MCF 10A (cell line): ENCODE measurements at regions of chr12 and their contacts with region 1.

Region 1: DNA sequence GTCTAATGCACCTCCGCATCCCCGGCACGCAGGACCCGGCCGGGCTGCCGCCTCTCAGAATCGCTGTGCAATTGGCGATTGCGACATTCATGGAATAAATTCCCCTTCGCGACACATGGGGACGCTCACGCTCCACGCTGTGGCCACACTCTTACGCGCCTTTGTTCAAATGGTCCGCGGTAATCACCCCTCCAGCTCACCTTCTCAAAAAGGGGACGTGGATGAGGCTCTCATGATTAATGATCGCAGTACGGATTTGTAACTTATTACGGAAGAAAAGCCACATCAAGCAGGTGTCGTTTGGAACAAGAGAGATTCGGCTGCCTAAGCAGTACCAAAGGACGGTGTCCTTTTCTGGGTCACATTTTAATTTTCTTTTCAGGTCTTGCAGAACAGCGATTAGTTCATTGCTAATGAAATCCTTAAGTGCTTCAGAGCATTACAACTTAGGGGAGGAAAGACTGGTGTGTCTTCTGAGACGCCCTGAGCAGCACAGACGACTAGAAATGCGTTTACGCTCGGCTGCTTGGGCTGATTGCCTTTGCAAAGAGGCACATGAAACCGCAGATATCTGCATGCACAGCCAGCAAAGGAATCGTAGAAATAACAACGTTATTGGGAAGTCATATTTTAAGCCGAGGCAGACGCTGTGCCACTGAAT is 37.3 kb upstream of the ADGRD1 start:
- DNase-seq: peak; percentile 27
- H3K4me3 Mint-ChIP-seq: no peak overlapping the region
- H3K27ac Mint-ChIP-seq: no peak overlapping the region
- H3K4me1 Mint-ChIP-seq: peaks cover 19% of the 10 kb centered on the region
- H3K27me3 Mint-ChIP-seq: peaks cover 38% of the 10 kb centered on the region
- CTCF ChIP-seq: peak; percentile 95

Region 2: GRCh38 chr12:130761537-130762318 is 154.7 kb before region 1 on chr12:
- CTCF ChIA-PET with region 1: no interaction called
- POLR2A ChIA-PET with region 1: no interaction called
- intact Hi-C with region 1: no loop called
- DNase-seq: peak; percentile 45
- H3K4me3 Mint-ChIP-seq: no peak overlapping the region
- H3K27ac Mint-ChIP-seq: no peak overlapping the region
- H3K4me1 Mint-ChIP-seq: no peaks in the 10 kb centered on the region
- H3K27me3 Mint-ChIP-seq: no peaks in the 10 kb centered on the region
- CTCF ChIP-seq: peak; percentile 85

Region 3: GRCh38 chr12:131092901-131093603 is 176.7 kb after region 1 on chr12:
- CTCF ChIA-PET with region 1: interaction called, 4 read pairs
- POLR2A ChIA-PET with region 1: no interaction called
- intact Hi-C with region 1: loop called (anchors 5 kb)
- DNase-seq: peak; percentile 78
- H3K4me3 Mint-ChIP-seq: no peak overlapping the region
- H3K27ac Mint-ChIP-seq: no peak overlapping the region
- H3K4me1 Mint-ChIP-seq: peaks cover 11% of the 10 kb centered on the region
- H3K27me3 Mint-ChIP-seq: peaks cover 22% of the 10 kb centered on the region
- CTCF ChIP-seq: no peak

Region 4: GRCh38 chr12:131132118-131132892 is 215.9 kb after region 1 on chr12:
- CTCF ChIA-PET with region 1: interaction called, 3 read pairs
- POLR2A ChIA-PET with region 1: no interaction called
- intact Hi-C with region 1: loop called (anchors 2 kb)
- DNase-seq: peak; percentile 63
- H3K4me3 Mint-ChIP-seq: no peak overlapping the region
- H3K27ac Mint-ChIP-seq: no peak overlapping the region
- H3K4me1 Mint-ChIP-seq: peaks cover 18% of the 10 kb centered on the region
- H3K27me3 Mint-ChIP-seq: peaks cover 2% of the 10 kb centered on the region
- CTCF ChIP-seq: peak; percentile 75

Region 5: DNA sequence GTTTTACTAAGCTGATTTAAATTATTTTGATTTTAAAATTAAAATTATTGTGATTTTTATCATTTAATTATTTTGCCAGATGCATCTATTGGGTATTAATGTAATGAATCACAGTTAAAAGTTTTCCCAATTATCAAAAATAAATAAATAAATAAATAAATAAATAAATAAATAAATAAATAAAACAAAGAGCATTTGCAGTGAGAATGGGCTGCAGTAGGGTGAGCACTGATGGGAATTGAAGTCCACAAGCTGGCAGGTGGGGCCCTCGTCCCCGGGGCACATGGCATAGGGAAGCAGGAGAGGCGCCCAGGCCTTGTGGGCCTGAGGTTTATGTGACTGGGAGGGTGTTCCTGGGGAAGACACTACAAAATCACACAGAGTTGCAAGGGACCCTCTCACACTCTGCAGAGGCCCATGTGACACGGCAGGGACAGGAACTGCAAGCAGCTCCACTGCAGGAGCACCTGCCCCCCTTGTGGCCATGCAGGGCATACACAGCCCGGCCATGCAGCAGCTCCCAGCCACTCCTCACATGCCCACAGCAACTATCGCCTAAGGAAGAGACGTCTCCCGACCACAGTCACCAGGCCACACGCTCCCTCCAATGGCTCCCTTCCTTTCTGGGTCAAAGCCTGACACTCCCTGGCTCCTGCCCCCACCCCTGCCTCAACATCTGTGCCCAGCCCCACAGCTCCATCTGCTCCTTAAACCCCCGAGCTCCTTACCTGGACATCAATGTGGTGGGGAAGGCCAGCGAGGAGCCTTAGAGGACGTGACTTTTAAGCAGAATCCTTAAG is 538.2 kb after region 1 on chr12:
- CTCF ChIA-PET with region 1: no interaction called
- POLR2A ChIA-PET with region 1: no interaction called
- intact Hi-C with region 1: loop called (anchors 2 kb)
- DNase-seq: peak; percentile 57
- H3K4me3 Mint-ChIP-seq: no peak overlapping the region
- H3K27ac Mint-ChIP-seq: no peak overlapping the region
- H3K4me1 Mint-ChIP-seq: peaks cover 5% of the 10 kb centered on the region
- H3K27me3 Mint-ChIP-seq: peaks cover 44% of the 10 kb centered on the region
- CTCF ChIP-seq: peak; percentile 92

Region 6: DNA sequence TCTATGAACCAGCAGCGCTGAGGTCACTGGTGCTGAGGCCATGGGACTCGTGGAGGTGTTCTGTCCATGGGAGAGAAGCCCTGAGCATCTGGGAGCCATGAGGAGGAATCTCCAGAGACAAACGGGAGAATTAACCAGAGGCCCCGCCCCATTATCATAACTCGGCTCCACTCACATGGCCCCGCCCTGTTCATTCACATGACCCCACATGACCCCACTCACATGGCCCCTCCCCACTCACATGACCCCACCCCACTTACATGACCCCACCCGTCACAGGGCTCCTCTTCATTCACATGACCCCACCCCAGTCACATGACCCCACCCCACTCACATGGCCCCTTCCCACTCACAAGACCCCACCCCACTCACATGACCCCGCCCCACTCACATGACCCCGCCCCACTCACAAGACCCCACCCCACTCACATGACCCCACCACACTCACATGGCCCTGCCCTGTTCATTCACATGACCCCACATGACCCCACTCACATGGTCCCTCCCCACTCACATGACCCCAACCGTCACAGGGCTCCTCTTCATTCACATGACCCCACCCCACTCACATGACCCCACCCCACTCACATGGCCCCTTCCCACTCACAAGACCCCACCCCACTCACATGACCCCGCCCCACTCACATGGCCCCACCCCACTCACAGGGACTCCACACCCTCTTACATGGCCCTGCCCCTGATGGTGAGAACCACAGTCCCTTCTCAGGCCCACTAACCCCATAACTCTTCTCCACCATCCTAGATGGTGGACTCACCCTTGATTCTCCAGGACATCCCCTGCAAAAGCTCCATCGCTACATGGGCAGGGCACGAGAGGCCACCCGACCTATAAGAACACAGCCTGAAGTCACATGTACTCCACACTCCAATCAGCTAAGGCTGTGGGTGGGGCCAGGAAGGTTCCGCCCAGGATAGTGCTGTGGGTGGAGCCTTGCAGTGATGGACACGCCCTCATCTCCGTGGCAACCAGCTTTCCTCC is 643.4 kb after region 1 on chr12:
- CTCF ChIA-PET with region 1: no interaction called
- POLR2A ChIA-PET with region 1: no interaction called
- intact Hi-C with region 1: loop called (anchors 10 kb)
- DNase-seq: no peak
- H3K4me3 Mint-ChIP-seq: no peak overlapping the region
- H3K27ac Mint-ChIP-seq: no peak overlapping the region
- H3K4me1 Mint-ChIP-seq: no peaks in the 10 kb centered on the region
- H3K27me3 Mint-ChIP-seq: peaks cover under 1% of the 10 kb centered on the region
- CTCF ChIP-seq: no peak

Region 7: DNA sequence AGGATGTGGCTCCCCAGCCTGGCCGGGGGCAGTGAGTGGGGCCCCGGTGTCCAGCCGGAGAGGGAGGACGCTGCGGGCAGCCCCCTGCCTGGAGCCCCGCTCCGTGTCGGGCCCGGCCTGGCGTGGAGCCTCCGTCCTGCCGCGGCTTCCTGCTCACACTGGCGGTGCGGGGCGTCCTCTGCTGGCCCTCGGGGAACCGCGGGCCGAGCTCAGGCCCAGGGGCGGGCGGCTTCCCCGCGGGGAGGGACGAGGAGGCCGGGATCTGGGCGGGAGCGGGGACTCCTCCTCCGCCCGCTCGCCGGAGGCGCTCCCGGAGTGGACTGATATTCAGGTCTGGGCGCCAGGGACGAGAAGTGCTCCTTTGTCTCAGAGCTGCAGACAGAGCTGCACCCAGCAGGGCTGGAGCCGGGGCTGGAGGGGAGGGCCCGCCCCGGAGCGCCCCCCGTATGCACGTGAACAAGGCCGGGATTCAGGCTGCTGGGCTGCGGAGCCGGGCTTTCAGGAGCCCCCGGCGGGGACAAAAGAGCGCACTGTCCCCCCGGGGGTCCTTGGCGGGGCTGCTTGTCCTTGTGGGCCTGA is 914.0 kb after region 1 on chr12:
- CTCF ChIA-PET with region 1: interaction called, 3 read pairs
- POLR2A ChIA-PET with region 1: no interaction called
- intact Hi-C with region 1: loop called (anchors 5 kb)
- DNase-seq: peak; percentile 80
- H3K4me3 Mint-ChIP-seq: peak overlapping the region; percentile 67
- H3K27ac Mint-ChIP-seq: no peak overlapping the region
- H3K4me1 Mint-ChIP-seq: peaks cover 5% of the 10 kb centered on the region
- H3K27me3 Mint-ChIP-seq: no peaks in the 10 kb centered on the region
- CTCF ChIP-seq: peak; percentile 83